ENCODE measurements at regions of chr1 and their contacts with region 1.

Region 1: GRCh38 chr1:205061665-205062069 is 18.7 kb downstream of the CNTN2 start:
- DNase-seq: peak; percentile 83
- ATAC-seq: peak; percentile 86
- H3K4me3 Mint-ChIP-seq: no peak overlapping the region
- H3K27ac Mint-ChIP-seq: no peak overlapping the region
- H3K4me1 Mint-ChIP-seq: no peaks in the 10 kb centered on the region
- H3K27me3 Mint-ChIP-seq: no peaks in the 10 kb centered on the region
- CTCF ChIP-seq: peak; percentile 89

Region 2: GRCh38 chr1:204541626-204542025 is 520.0 kb before region 1 on chr1:
- CTCF ChIA-PET with region 1: no interaction called
- POLR2A ChIA-PET with region 1: no interaction called
- intact Hi-C with region 1: no loop called
- DNase-seq: no peak
- ATAC-seq: no peak
- H3K4me3 Mint-ChIP-seq: no peak overlapping the region
- H3K27ac Mint-ChIP-seq: peak overlapping the region; percentile 27
- H3K4me1 Mint-ChIP-seq: peaks cover 55% of the 10 kb centered on the region
- H3K27me3 Mint-ChIP-seq: no peaks in the 10 kb centered on the region
- CTCF ChIP-seq: no peak

Region 3: DNA sequence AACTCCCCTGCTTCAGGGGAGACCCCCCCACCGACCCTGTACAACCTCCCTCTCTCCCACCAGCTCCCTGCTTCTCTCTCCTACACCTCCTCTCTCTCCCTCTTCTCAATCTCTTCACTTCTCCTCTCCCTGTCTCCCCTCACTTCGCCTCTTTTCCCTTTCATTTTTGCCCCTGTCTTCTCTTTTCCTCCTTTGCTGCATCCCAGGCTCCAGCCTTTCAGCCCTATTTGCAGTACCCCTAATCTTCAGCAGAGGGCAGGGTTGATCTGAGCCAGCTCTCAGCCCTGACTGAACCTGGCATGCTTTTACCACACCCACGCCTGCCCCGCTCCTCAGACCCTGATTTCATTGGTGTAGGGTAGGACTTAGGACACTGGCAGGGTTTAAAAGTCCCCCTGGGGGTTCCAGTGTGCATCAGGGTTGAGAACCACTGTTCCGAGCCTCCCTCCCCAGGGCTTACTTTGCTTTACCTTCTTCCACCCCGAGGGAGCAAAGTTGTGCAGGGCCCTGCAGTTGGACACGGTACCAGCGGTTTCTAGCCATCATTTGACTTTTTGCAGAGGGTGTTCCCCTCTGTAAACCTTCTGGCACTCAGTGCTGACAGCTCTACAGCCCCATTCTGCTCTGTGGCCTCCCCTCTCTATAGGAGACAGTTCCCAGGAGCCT is 86.0 kb before region 1 on chr1:
- CTCF ChIA-PET with region 1: interaction called, 71 read pairs
- POLR2A ChIA-PET with region 1: interaction called, 4 read pairs
- intact Hi-C with region 1: no loop called
- DNase-seq: peak; percentile 67
- ATAC-seq: peak; percentile 88
- H3K4me3 Mint-ChIP-seq: no peak overlapping the region
- H3K27ac Mint-ChIP-seq: no peak overlapping the region
- H3K4me1 Mint-ChIP-seq: peaks cover 1% of the 10 kb centered on the region
- H3K27me3 Mint-ChIP-seq: peaks cover 10% of the 10 kb centered on the region
- CTCF ChIP-seq: peak; percentile 83

Region 4: DNA sequence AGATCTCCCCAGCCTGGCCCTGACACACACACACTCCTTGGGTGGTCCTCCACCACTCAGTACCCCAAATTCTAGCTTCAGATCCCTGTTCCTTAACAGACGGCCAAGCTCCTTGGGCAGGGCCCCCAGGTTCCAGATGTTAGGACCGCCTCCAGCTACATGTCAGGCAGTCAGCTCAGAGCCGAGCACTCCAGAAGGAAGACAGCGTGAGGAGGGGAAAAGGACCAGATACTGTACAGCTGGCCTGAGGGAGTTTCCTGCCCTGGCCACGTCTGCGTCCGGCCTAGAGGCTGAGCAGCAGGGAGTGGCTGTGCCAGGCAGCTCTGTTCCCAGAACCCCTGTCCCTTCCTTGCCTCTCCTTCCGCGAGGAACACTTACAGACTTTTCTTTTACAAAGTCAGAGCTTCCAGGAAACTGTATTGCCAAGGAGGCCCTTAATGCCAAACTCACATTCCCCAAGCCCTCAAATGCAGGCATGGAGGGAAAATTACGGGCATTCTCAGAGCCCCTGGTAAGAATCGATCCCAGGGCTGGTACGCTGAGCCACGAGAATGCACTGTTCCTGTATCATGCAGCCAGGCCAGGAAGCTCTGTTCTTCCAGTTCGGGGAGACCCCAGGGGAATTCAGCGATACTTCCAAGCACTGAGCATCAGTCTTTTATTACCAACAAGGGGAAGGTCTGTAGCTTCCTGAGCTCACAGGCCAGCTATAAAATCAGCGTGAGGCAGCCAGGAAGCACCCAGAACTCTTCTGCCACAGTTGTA is 63.9 kb before region 1 on chr1:
- CTCF ChIA-PET with region 1: interaction called, 188 read pairs
- POLR2A ChIA-PET with region 1: no interaction called
- intact Hi-C with region 1: no loop called
- DNase-seq: no peak
- ATAC-seq: no peak
- H3K4me3 Mint-ChIP-seq: no peak overlapping the region
- H3K27ac Mint-ChIP-seq: no peak overlapping the region
- H3K4me1 Mint-ChIP-seq: peaks cover 3% of the 10 kb centered on the region
- H3K27me3 Mint-ChIP-seq: no peaks in the 10 kb centered on the region
- CTCF ChIP-seq: no peak

Region 5: DNA sequence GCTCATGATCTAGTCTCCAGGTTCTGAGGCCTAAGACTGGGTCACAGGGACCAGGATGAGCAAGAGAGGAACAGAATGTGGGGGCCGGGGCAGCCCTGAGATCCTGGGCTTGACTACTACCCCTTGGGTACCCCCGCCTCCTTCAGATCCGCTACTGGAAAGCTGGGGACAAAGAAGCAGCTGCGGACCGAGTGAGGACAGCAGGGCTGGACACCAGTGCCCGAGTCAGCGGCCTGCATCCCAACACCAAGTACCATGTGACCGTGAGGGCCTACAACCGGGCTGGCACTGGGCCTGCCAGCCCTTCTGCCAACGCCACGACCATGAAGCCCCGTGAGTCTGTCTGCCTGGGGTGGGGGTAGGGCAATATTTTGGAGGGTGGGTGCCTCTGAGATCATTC is 10.1 kb after region 1 on chr1:
- CTCF ChIA-PET with region 1: interaction called, 17 read pairs
- POLR2A ChIA-PET with region 1: no interaction called
- intact Hi-C with region 1: no loop called
- DNase-seq: no peak
- ATAC-seq: no peak
- H3K4me3 Mint-ChIP-seq: no peak overlapping the region
- H3K27ac Mint-ChIP-seq: no peak overlapping the region
- H3K4me1 Mint-ChIP-seq: no peaks in the 10 kb centered on the region
- H3K27me3 Mint-ChIP-seq: no peaks in the 10 kb centered on the region
- CTCF ChIP-seq: no peak

Region 6: DNA sequence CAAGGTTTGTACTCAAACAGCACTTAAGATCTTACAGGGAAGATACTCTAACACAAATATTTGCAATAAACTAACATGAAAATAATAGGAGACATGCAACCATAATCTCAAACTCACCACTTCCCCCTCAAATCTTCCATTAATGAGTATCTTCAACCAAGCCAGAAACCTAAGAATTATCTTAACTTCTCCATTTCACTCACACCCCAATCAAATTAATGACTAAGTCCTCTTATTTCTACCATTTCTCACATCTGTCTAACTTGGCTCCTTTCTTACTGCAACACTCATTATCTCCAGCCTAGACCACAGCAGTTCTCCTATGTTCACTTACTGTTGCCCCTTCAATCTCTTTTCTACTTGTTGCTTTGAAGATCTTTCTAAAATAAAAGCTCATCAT is 49.7 kb after region 1 on chr1:
- CTCF ChIA-PET with region 1: interaction called, 11 read pairs
- POLR2A ChIA-PET with region 1: no interaction called
- intact Hi-C with region 1: no loop called
- DNase-seq: no peak
- ATAC-seq: no peak
- H3K4me3 Mint-ChIP-seq: no peak overlapping the region
- H3K27ac Mint-ChIP-seq: no peak overlapping the region
- H3K4me1 Mint-ChIP-seq: peaks cover 14% of the 10 kb centered on the region
- H3K27me3 Mint-ChIP-seq: no peaks in the 10 kb centered on the region
- CTCF ChIP-seq: no peak

Measured in activated CD8-positive, alpha-beta T cell treated with anti-CD3 and anti-CD28 coated beads for 36 hours (primary cell).